ENCODE measurements at regions of chr3 and their contacts with region 1.

Region 1: DNA sequence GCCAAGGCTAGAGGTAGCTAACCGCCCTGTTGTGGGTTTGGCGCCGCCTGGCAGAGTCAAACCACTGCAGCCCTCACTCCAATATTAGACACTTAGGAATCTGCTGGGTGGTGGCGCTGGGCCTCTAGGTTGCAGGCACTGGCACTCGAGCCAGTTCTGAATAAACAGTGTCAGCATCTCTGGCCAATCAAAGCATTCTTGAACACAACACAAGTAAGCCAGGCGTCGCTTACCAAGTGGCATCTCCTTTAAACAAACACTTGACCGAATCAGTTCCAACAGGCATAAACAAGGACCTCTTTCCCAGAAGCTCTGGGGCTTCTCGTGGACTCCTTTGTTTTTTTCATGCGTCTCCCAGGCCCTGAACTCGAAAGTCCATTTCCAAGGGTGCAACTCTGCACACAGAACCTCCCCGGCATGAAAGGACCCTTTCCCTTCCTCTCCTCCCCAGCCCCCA is 82.3 kb downstream of the LRIG1 start:
- DNase-seq: peak; percentile 46 to 94 (median 64)

Region 2: GRCh38 chr3:66450390-66451022 is 32.0 kb after region 1 on chr3:
- intact Hi-C with region 1: loop called (anchors 5 kb)
- DNase-seq: peak in 3 of 10 donors; percentile 42 to 78 (median 46)

Measured in posterior cingulate gyrus (tissue), 11 donors.